ENCODE measurements at regions of chr17 and their contacts with region 1.

Region 1: DNA sequence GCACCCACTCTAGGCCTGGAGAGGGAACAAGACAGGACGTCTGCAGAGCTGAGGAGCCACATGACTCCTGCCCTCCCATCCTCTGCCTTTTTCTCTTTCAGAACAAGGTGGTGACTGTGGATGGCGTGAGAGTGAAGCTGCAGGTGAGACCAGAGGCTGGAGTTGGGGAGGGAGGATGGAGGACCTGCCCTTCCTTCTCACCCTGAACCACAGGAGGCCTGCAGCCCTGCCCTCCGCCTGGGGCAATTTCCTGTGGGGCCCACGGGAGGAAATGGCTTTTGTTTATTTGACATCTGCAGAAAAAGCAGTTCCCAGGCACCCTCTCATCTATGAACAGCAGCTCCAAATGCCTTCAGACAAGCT is 5.1 kb downstream of the RAB37 start:
- DNase-seq: peak in 5 of 10 donors; percentile 43 to 71 (median 60)
- ATAC-seq: peak; percentile 4 to 16
- H3K4me3 Mint-ChIP-seq: peak overlapping the region; percentile 64 to 88 (median 84)
- H3K27ac Mint-ChIP-seq: peak overlapping the region; percentile 90 to 99 (median 96)
- H3K4me1 Mint-ChIP-seq: peaks cover 42 to 88% (median 85%) of the 10 kb centered on the region in 4 donors
- H3K27me3 Mint-ChIP-seq: no peaks in the 10 kb centered on the region

Region 2: GRCh38 chr17:74566132-74566753 is 175.9 kb before region 1 on chr17:
- POLR2A ChIA-PET with region 1: no interaction called
- DNase-seq: peak in 4 of 10 donors; percentile 6 to 28 (median 20)
- ATAC-seq: peak in 1 of 2 donors; percentile 42
- H3K4me3 Mint-ChIP-seq: peak overlapping the region in 1 of 10 donors; percentile 57
- H3K27ac Mint-ChIP-seq: no peak overlapping the region
- H3K4me1 Mint-ChIP-seq: peaks cover 5 to 14% (median 12%) of the 10 kb centered on the region in 4 donors
- H3K27me3 Mint-ChIP-seq: peaks cover 23 to 49% (median 32%) of the 10 kb centered on the region in 5 donors

Region 3: GRCh38 chr17:74759243-74759801 is 17.2 kb after region 1 on chr17:
- POLR2A ChIA-PET with region 1: interaction called, 200 read pairs
- DNase-seq: peak in 8 of 10 donors; percentile 34 to 74 (median 56)
- ATAC-seq: peak; percentile 91 to 92
- H3K4me3 Mint-ChIP-seq: peak overlapping the region; percentile 69 to 97 (median 84)
- H3K27ac Mint-ChIP-seq: peak overlapping the region; percentile 88 to 94 (median 92)
- H3K4me1 Mint-ChIP-seq: peaks cover 30 to 81% (median 71%) of the 10 kb centered on the region in 4 donors
- H3K27me3 Mint-ChIP-seq: no peaks in the 10 kb centered on the region

Region 4: DNA sequence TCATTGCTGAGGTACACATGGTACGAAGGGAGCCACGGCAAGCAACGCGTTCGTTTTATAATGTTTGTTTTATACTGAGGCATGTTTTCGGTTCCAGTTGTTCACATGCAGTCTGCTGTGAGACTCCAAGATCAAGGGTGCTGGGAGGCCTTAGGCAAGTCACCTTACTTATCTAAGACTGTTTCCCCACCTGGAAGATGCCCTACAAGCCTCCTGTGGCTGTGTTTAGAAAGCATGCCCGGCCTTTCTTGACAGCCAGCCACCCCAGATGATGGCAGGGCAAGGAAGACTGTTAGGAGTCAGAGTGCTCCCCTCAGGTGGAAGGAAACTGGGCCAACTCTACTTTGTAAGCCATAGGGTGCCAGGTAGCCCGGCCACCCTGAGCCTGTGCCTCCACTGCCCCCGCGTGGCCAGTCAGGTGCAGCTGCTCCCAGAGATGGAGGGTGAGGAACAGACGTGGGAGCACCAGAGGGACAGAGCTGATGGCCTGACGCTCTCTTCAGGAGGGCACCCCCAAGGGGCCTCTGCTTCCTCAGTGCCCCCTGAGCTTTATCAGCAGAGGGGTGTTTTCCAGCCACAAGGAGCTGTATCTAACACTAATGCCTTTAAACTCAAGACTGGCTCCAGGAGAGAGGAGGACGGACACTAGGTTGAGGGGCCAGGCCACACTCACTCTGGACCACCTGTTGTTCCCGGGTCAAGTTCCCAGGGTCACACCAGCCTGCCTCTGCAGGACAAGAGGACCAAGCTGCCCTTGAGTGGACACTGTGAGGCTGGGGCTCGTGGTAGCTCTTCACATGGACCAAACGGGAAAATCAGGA is 28.6 kb after region 1 on chr17:
- POLR2A ChIA-PET with region 1: interaction called, 231 read pairs
- DNase-seq: peak; percentile 60 to 88 (median 72)
- ATAC-seq: peak; percentile 93 to 96
- H3K4me3 Mint-ChIP-seq: peak overlapping the region in 2 of 10 donors; percentile 2 to 14
- H3K27ac Mint-ChIP-seq: peak overlapping the region; percentile 43 to 91 (median 84)
- H3K4me1 Mint-ChIP-seq: peaks cover 30 to 41% (median 36%) of the 10 kb centered on the region in 4 donors
- H3K27me3 Mint-ChIP-seq: no peaks in the 10 kb centered on the region

Measured in naive thymus-derived CD8-positive, alpha-beta T cell (primary cell).